Esophagus squamous epithelium (tissue), 5 donors: ENCODE measurements at regions of chr17 and their contacts with region 1.

Region 1: GRCh38 chr17:48543107-48543853 is 1.6 kb downstream of the HOXB2 start:
- DNase-seq: no peak
- H3K4me3 ChIP-seq: peak overlapping the region; percentile 53 to 80 (median 72)
- H3K27ac ChIP-seq: peak overlapping the region; percentile 91 to 95 (median 92)
- H3K4me1 ChIP-seq: peaks cover 7 to 76% (median 26%) of the 10 kb centered on the region in 3 donors
- H3K27me3 ChIP-seq: peaks cover 0 to 68% (median 0%) of the 10 kb centered on the region in 4 donors
- CTCF ChIP-seq: peak in 4 of 6 experiments; percentile 10 to 37 (median 26)
- POLR2A ChIP-seq: no peak

Region 2: DNA sequence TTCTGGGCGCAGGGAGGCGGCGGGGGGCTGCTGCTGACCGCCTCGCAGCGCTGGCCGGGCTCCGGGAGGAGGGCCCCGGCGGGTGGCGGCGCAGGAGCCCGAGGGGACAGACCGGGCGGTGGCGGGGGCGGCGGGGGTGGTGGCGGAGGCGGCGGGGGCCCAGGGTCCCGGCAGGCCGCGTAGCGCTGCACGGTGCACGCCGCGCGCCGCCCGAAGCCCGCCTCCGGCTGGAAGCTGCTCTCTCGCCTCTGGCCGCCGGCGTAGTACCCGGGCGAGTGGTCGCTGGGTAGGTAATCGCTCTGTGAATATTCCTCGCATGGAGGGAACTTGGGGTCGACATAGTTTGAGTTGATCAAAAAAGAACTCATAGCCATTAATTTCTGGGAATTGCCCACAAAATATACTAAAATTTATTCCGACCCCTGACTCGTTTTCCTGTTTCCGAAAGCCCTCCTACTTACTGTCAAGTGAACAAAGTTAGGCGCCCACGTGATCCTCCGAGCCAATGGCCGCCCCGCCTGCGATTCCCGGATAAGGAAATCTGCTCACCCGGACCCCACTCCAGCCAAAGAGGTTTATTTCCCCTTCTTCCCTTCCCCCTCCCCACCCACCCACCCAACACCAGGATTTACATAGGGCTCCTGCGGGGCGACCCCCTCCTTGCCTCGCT is 34.8 kb after region 1 on chr17 and contains the start of gene HOXB4:
- intact Hi-C with region 1: loop called (anchors 5 kb)
- DNase-seq: no peak
- H3K4me3 ChIP-seq: peak within 1 kb of the TSS; percentile 49 to 83 (median 61)
- H3K27ac ChIP-seq: peak within 1 kb of the TSS; percentile 88 to 96 (median 92)
- H3K4me1 ChIP-seq: peaks cover 0 to 95% (median 49%) of the 10 kb centered on the region in 3 donors
- H3K27me3 ChIP-seq: peaks cover 0 to 100% (median 6%) of the 10 kb centered on the region in 4 donors
- CTCF ChIP-seq: no peak
- POLR2A ChIP-seq: peak in 1 of 4 donors; percentile 38
- total RNA-seq, gene HOXB4: 0.27 to 2.9 (median 1.8) TPM